Right lobe of liver (tissue), 6 donors: ENCODE measurements at regions of chr13 and their contacts with region 1.

Region 1: GRCh38 chr13:113098162-113098732 is 7.3 kb upstream of the F7 start:
- DNase-seq: no peak
- ATAC-seq: no peak
- H3K4me3 ChIP-seq: no peak overlapping the region
- H3K27ac ChIP-seq: no peak overlapping the region
- H3K4me1 ChIP-seq: no peaks in the 10 kb centered on the region
- H3K27me3 ChIP-seq: no peaks in the 10 kb centered on the region
- CTCF ChIP-seq: no peak
- POLR2A ChIP-seq: no peak

Region 2: DNA sequence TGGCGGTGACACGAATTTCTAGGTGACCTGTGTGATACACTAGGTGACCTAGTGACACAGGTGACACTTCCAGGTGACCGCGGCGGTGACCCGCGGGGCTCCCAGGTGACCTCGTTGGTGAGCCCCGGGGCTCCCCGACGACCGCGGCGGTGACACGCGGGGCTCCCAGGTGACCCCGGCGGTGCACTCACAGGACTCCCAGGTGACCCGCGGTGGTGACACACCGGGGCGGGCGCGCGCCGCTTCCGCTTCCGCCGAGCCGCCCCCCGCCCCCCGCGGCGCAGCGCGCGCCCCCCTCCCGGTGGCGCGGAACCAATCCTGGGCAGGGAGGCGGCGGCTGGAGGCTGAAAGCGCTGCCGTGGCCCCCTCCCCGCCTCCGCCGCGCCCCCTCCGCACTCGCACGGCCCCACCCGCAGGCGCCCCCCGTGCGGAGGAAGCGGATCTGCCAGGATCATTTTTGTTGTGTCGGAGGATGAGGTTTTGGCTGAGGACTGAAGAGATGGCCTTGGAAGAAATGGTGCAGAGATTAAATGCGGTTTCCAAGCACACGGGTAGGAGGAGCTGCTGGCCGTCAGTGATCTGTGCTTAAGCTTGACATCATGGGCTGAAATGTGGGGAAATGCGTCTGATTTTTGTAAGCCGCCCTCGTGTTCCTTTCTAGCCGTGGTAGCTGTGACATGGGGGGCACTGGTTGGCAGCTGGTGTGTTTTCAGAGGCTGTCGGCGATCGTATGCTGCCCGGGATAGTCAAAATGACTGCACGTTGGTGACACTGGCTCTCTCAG is 129.1 kb before region 1 on chr13 and contains the start of gene MCF2L:
- intact Hi-C with region 1: no loop called
- DNase-seq: peak in 2 of 3 donors; percentile 55 to 74
- ATAC-seq: peak; percentile 68 to 82 (median 72)
- H3K4me3 ChIP-seq: peak within 1 kb of the TSS; percentile 54 to 62 (median 61)
- H3K27ac ChIP-seq: peak within 1 kb of the TSS; percentile 57 to 82 (median 60)
- H3K4me1 ChIP-seq: peaks cover 0 to 5% (median 1%) of the 10 kb centered on the region in 4 donors
- H3K27me3 ChIP-seq: no peaks in the 10 kb centered on the region
- CTCF ChIP-seq: peak; percentile 13 to 35 (median 23)
- POLR2A ChIP-seq: peak; percentile 55
- total RNA-seq, gene MCF2L: 9.6 to 18.4 (median 11.7) TPM

Region 3: DNA sequence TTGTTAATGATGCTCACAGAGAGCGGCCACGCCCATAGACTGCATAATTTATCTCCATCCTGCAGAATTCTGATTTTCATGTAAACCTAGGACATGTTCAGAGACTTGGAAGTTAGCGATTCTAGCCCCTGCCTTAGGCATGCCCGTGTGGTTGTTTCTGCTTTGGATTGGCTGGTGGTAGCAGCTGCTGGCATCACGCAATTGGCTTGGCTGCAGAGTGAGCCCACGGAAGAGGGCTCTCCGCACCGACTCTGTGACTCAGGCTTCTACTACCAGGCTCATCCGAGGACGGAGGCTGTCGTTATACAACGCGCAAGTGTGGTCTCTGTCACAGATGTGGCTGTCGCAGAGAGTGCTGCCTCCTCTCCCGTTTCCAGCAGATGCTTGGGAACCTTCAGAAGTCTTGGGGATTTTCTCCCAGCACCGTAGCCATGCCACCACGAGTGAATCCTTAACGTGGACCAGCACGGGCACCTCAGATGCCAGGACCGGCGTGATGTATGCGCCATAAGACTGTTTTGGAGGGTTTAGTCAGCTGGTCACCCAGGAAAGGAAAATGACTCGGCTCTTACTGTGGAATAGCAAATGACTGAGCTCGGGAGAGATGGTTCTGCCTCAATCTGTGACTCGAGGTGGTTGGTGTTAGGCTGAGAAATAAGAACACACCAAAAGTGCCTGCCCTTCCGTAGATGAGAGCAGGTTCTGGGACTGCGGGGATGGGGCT is 53.7 kb before region 1 on chr13:
- intact Hi-C with region 1: loop called in 1 of 2 experiments (anchors 10 kb)
- DNase-seq: peak in 1 of 3 donors; percentile 16
- ATAC-seq: no peak
- H3K4me3 ChIP-seq: no peak overlapping the region
- H3K27ac ChIP-seq: no peak overlapping the region
- H3K4me1 ChIP-seq: no peaks in the 10 kb centered on the region
- H3K27me3 ChIP-seq: no peaks in the 10 kb centered on the region
- CTCF ChIP-seq: no peak
- POLR2A ChIP-seq: no peak